Activated CD8-positive, alpha-beta T cell treated with anti-CD3 and anti-CD28 coated beads, Interleukin-2, amount 10 ng/mL, durations not matched to agents 7 days and 5 days (primary cell): ENCODE measurements at regions of chr2 and their contacts with region 1.

Region 1: GRCh38 chr2:70340921-70341765 is 39.3 kb upstream of the FAM136A start:
- DNase-seq: peak; percentile 44
- ATAC-seq: peak; percentile 60
- H3K4me3 Mint-ChIP-seq: no peak overlapping the region
- H3K27ac Mint-ChIP-seq: no peak overlapping the region
- H3K4me1 Mint-ChIP-seq: no peaks in the 10 kb centered on the region
- H3K27me3 Mint-ChIP-seq: peaks cover 25% of the 10 kb centered on the region

Region 2: GRCh38 chr2:70248181-70248847 is 92.8 kb before region 1 on chr2 and contains the start of gene TIA1:
- CTCF ChIA-PET with region 1: no interaction called
- POLR2A ChIA-PET with region 1: no interaction called
- DNase-seq: peak; percentile 99
- ATAC-seq: peak; percentile 99
- H3K4me3 Mint-ChIP-seq: peak within 1 kb of the TSS; percentile 99
- H3K27ac Mint-ChIP-seq: peak within 1 kb of the TSS; percentile 98
- H3K4me1 Mint-ChIP-seq: peaks cover 36% of the 10 kb centered on the region
- H3K27me3 Mint-ChIP-seq: no peaks in the 10 kb centered on the region
- total RNA-seq, gene TIA1: 119 to 125 TPM

Region 3: DNA sequence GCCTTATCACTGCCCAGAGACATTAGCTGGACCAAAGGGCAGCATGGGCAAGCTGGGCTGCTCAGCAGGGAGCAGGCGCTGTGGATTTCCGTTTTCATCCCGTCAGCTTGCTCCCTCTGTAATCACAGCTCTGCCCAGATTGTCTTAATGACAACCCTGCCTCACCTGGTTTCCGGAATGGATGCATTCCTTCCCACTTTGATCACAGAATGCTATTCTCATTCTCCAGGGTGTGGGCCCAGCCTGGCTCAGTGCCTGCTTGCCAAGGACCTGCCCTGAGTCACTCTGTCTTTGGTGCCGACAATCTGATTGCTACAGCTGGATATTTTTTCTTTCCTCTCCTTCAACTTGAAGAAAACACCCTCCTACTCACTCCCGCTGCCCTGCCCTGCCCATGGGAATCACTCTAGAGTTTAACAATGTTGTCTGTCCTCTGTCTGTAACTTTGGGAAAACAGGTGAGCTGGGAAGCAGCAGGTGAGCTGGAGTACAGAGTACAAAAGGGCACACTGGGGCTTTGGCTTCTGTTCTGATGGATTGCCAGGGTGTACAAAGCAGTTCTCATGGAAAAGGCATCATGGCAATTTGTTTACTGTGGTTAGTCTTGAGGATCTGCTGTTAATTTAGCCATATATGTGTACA is 12.1 kb before region 1 on chr2:
- CTCF ChIA-PET with region 1: interaction called, 11 read pairs
- POLR2A ChIA-PET with region 1: no interaction called
- DNase-seq: no peak
- ATAC-seq: no peak
- H3K4me3 Mint-ChIP-seq: no peak overlapping the region
- H3K27ac Mint-ChIP-seq: no peak overlapping the region
- H3K4me1 Mint-ChIP-seq: no peaks in the 10 kb centered on the region
- H3K27me3 Mint-ChIP-seq: peaks cover 12% of the 10 kb centered on the region

Region 4: DNA sequence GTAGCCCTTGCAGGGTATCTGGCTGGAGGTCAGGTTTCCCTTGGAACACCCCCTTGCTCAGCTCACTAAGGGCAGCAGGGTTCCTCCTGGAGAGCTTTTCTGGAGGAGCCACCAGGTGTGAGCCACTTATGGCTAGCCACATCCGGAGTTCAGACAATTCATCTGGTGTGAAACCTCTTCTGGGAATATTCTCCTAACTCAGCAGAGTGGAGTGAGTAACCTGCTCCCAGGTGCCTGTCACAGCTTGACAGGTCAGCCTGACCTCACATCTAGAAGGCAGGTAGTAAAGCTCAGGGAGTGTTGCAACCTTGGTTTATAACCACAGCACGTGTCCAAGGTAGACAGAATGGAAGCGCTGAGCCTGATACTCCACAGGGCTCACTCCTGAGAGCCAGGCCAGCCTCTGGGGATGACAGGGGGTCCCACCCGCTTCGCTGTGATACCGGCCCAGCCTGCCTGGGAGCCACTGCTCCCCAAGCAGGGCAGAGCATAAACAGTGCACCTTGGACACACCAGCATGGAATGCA is 275.1 kb after region 1 on chr2:
- CTCF ChIA-PET with region 1: interaction called, 53 read pairs
- POLR2A ChIA-PET with region 1: interaction called, 3 read pairs
- DNase-seq: no peak
- ATAC-seq: no peak
- H3K4me3 Mint-ChIP-seq: no peak overlapping the region
- H3K27ac Mint-ChIP-seq: no peak overlapping the region
- H3K4me1 Mint-ChIP-seq: peaks cover 5% of the 10 kb centered on the region
- H3K27me3 Mint-ChIP-seq: peaks cover 16% of the 10 kb centered on the region

Region 5: GRCh38 chr2:70647873-70648481 is 306.8 kb after region 1 on chr2:
- CTCF ChIA-PET with region 1: interaction called, 19 read pairs
- POLR2A ChIA-PET with region 1: no interaction called
- DNase-seq: peak; percentile 82
- ATAC-seq: peak; percentile 82
- H3K4me3 Mint-ChIP-seq: no peak overlapping the region
- H3K27ac Mint-ChIP-seq: no peak overlapping the region
- H3K4me1 Mint-ChIP-seq: no peaks in the 10 kb centered on the region
- H3K27me3 Mint-ChIP-seq: peaks cover 15% of the 10 kb centered on the region